T-cell (primary cell): ENCODE measurements at regions of chr6 and their contacts with region 1.

Region 1: GRCh38 chr6:42118162-42119001 is 24.0 kb downstream of the C6orf132 start:
- DNase-seq: no peak
- ATAC-seq: no peak
- H3K4me3 ChIP-seq: no peak overlapping the region
- H3K4me3 Mint-ChIP-seq: no peak overlapping the region
- H3K27ac ChIP-seq: no peak overlapping the region
- H3K27ac Mint-ChIP-seq: no peak overlapping the region
- H3K4me1 ChIP-seq: no peaks in the 10 kb centered on the region
- H3K4me1 Mint-ChIP-seq: no peaks in the 10 kb centered on the region
- H3K27me3 ChIP-seq: peaks cover 0 to 11% of the 10 kb centered on the region in 2 experiments
- H3K27me3 Mint-ChIP-seq: peaks cover 4 to 7% of the 10 kb centered on the region in 2 donors

Region 2: GRCh38 chr6:42050266-42051032 is 67.9 kb before region 1 on chr6 and contains the start of gene TAF8:
- CTCF ChIA-PET with region 1: no interaction called
- POLR2A ChIA-PET with region 1: no interaction called
- DNase-seq: peak; percentile 76 to 93 (median 84)
- ATAC-seq: peak; percentile 62 to 69 (median 63)
- H3K4me3 ChIP-seq: peak within 1 kb of the TSS; percentile 80 to 98
- H3K4me3 Mint-ChIP-seq: peak within 1 kb of the TSS; percentile 93 to 99 (median 98)
- H3K27ac ChIP-seq: peak within 1 kb of the TSS; percentile 77
- H3K27ac Mint-ChIP-seq: peak within 1 kb of the TSS; percentile 97 to 98
- H3K4me1 ChIP-seq: peaks cover 19 to 59% of the 10 kb centered on the region in 2 experiments
- H3K4me1 Mint-ChIP-seq: peaks cover 60 to 72% (median 61%) of the 10 kb centered on the region in 3 donors
- H3K27me3 ChIP-seq: no peaks in the 10 kb centered on the region
- H3K27me3 Mint-ChIP-seq: no peaks in the 10 kb centered on the region
- total RNA-seq, gene TAF8: 46.0 to 55.5 (median 47.6) TPM

Region 3: DNA sequence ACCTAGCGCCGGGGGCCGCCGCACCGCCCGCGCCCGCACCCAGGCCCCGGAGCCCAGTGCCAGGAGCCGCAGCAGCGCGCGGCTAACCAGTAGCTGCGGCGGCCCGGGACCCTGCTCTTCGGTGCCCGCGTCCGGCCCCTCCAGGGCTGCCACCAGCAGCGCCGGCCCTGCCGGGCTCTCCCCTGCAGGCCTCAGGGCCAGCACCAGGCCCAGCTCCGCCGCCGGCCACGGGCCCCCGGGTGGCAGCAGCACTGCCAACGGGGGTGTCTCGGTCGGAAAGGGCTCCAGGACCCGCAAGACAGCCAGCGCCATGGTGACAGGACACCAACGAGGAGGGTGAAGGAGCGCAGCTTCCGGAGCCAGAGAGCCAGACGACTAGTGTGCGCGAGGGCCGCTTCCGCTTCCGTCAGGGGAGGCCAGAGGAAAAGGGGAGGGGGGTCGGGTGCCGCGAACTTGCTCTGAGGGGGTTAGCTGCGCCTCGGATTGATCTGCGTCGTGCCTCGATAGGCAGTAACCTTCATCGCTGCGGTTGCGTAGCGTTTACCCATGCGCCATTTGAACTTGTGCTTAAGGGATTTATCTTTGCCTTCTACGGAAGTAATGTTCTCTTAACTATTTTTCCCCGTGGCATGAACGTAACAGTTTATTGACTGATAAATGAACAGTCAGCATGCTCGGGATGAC is 860.6 kb after region 1 on chr6 and contains the start of gene PEX6:
- CTCF ChIA-PET with region 1: no interaction called
- POLR2A ChIA-PET with region 1: interaction called in 1 of 2 experiments, 11 read pairs
- DNase-seq: peak; percentile 88 to 98 (median 95)
- ATAC-seq: peak; percentile 94 to 96 (median 95)
- H3K4me3 ChIP-seq: peak within 1 kb of the TSS; percentile 72 to 85
- H3K4me3 Mint-ChIP-seq: peak within 1 kb of the TSS; percentile 88 to 93 (median 92)
- H3K27ac ChIP-seq: peak within 1 kb of the TSS; percentile 85
- H3K27ac Mint-ChIP-seq: peak within 1 kb of the TSS; percentile 97 to 99
- H3K4me1 ChIP-seq: peaks cover 23 to 48% of the 10 kb centered on the region in 2 experiments
- H3K4me1 Mint-ChIP-seq: peaks cover 48 to 54% (median 49%) of the 10 kb centered on the region in 3 donors
- H3K27me3 ChIP-seq: no peaks in the 10 kb centered on the region
- H3K27me3 Mint-ChIP-seq: no peaks in the 10 kb centered on the region
- total RNA-seq, gene PEX6: 20.5 to 30.5 (median 27.4) TPM